ENCODE measurements at regions of chr18 and their contacts with region 1.

Region 1: DNA sequence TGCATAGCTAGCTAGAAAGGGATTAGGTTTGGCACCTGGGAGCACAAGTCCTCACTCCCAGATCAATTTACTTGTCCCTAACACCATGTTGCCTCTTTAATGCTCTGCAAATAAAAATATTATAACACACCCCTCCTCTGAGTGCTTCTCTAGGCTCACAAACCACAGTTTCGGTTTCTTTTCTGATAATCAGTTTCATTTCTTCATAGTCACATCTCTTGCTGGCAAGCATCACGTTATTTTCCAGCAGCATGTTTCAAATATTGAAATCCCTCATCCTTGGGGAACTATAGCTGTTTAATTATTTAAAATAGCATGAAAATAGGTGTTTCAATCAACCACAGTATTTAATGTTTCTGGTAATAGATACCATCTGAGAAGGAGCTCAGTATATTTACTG is 13.9 kb upstream of the SMCHD1 start:
- DNase-seq: peak; percentile 79
- ATAC-seq: peak; percentile 28
- H3K4me3 ChIP-seq: peak overlapping the region in 3 of 5 experiments; percentile 11 to 58 (median 17)
- H3K4me3 Mint-ChIP-seq: peak overlapping the region; percentile 89
- H3K27ac ChIP-seq: peak overlapping the region; percentile 74 to 78
- H3K27ac Mint-ChIP-seq: peak overlapping the region; percentile 89
- H3K4me1 ChIP-seq: peaks cover 61 to 62% of the 10 kb centered on the region in 2 donors
- H3K4me1 Mint-ChIP-seq: peaks cover 47% of the 10 kb centered on the region
- H3K27me3 ChIP-seq: no peaks in the 10 kb centered on the region
- H3K27me3 Mint-ChIP-seq: no peaks in the 10 kb centered on the region
- CTCF ChIP-seq: no peak

Region 2: GRCh38 chr18:2571200-2572143 is 70.2 kb before region 1 on chr18 and contains the starts of genes METTL4 and NDC80:
- CTCF ChIA-PET with region 1: interaction called, 25 read pairs
- POLR2A ChIA-PET with region 1: interaction called, 49 read pairs
- intact Hi-C with region 1: loop called (anchors 1 kb)
- DNase-seq: peak; percentile 95
- ATAC-seq: peak; percentile 93
- H3K4me3 ChIP-seq: peak within 1 kb of the TSS; percentile 70 to 99 (median 81)
- H3K4me3 Mint-ChIP-seq: peak within 1 kb of the TSS; percentile 99
- H3K27ac ChIP-seq: peak within 1 kb of the TSS; percentile 97 to 98
- H3K27ac Mint-ChIP-seq: peak within 1 kb of the TSS; percentile 99
- H3K4me1 ChIP-seq: peaks cover 22 to 23% of the 10 kb centered on the region in 2 donors
- H3K4me1 Mint-ChIP-seq: peaks cover 45% of the 10 kb centered on the region
- H3K27me3 ChIP-seq: no peaks in the 10 kb centered on the region
- H3K27me3 Mint-ChIP-seq: no peaks in the 10 kb centered on the region
- CTCF ChIP-seq: no peak
- total RNA-seq, gene METTL4: 23.9 and 31.6 TPM in 2 replicates
- total RNA-seq, gene NDC80: 3.7 and 3.9 TPM in 2 replicates

Measured in B cell (primary cell).